Activated CD8-positive, alpha-beta T cell treated with anti-CD3 and anti-CD28 coated beads for 36 hours (primary cell): ENCODE measurements at regions of chr9 and their contacts with region 1.

Region 1: DNA sequence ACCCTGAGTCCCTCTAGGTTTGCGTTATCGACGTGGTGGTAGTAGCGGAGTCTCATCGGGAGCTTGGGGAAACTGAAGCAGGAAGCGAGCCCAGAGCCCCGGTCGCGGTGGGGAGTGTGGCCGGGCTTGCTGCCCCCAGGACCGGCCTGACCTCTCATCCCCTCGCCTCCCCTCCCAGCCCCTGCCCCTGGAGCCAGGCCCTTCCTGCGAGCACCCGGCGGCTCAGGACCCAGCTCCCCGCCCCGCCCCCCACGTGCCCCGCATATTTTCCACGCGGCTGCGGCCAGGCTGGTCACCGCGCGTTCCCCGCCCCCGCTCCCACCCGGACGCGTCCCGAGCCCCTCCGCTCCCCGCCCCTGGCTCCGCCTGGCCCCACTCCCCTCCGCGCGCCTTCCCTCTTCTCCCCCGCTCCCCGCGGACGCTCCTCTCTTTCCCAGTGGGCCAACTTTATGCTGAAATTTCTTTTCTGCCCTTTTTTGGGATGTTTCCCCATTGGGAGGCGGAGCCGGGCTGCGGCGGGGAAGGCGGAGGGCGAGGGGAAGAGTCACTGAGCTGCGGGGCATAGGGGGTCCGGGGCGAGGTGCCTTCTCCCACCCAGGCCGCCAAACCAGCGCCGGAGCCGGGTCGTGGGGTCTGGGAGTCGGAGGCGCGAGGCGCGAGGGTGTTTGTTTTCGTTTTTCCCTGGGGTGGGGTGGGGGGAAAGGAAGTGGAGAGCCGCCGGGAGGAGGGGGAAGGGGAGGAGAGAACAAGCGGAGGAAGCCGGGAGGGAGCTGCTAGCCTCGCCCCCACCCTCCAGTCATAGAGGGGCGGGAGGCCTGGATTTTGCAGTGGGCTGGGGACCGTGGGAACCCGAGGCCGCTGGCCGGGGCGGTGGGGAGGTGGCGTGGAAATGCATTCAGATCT is 957 bp upstream of the TPM2 start:
- DNase-seq: peak; percentile 47
- ATAC-seq: peak; percentile 22
- H3K4me3 Mint-ChIP-seq: peak overlapping the region; percentile 72
- H3K27ac Mint-ChIP-seq: peak overlapping the region; percentile 42
- H3K4me1 Mint-ChIP-seq: peaks cover 18% of the 10 kb centered on the region
- H3K27me3 Mint-ChIP-seq: no peaks in the 10 kb centered on the region
- CTCF ChIP-seq: no peak

Region 2: GRCh38 chr9:35664531-35665470 is 25.9 kb before region 1 on chr9 and contains the start of gene ARHGEF39:
- CTCF ChIA-PET with region 1: interaction called, 313 read pairs
- POLR2A ChIA-PET with region 1: interaction called, 12 read pairs
- intact Hi-C with region 1: no loop called
- DNase-seq: peak; percentile 80
- ATAC-seq: peak; percentile 89
- H3K4me3 Mint-ChIP-seq: peak within 1 kb of the TSS; percentile 84
- H3K27ac Mint-ChIP-seq: peak within 1 kb of the TSS; percentile 63
- H3K4me1 Mint-ChIP-seq: peaks cover 40% of the 10 kb centered on the region
- H3K27me3 Mint-ChIP-seq: no peaks in the 10 kb centered on the region
- CTCF ChIP-seq: no peak
- total RNA-seq, gene ARHGEF39: 16.0 to 19.9 TPM

Region 3: DNA sequence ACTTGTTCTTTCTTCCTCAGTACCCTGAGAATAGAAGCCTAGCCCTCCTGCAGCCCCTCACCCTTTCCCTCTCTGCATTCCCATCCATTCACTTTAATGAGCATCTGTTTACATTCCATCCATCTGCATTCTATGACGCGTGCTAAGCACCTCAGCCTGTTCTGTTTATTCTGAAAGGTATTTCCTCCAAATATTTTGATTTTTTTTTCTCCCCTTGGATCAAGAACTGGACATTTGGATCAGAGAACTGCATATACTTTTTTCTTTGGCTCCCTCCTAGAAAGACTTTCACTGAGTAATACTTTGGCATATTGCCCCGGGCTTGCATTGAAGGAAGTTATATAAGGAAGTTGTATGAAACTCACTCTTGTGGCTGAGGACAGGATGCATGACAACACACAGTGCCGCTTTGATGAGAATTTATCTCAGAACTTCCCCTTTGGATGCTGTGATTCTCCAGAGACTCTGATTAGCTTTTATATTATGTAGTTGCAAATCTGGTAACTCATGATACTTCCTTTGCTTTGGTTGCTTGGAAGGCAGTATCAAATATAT is 154.1 kb after region 1 on chr9:
- CTCF ChIA-PET with region 1: no interaction called
- POLR2A ChIA-PET with region 1: no interaction called
- intact Hi-C with region 1: no loop called
- DNase-seq: peak; percentile 37
- ATAC-seq: no peak
- H3K4me3 Mint-ChIP-seq: no peak overlapping the region
- H3K27ac Mint-ChIP-seq: no peak overlapping the region
- H3K4me1 Mint-ChIP-seq: peaks cover 39% of the 10 kb centered on the region
- H3K27me3 Mint-ChIP-seq: no peaks in the 10 kb centered on the region
- CTCF ChIP-seq: no peak